ENCODE measurements at regions of chr3 and their contacts with region 1.

Region 1: GRCh38 chr3:126522363-126522788 is 1.6 kb upstream of the CHST13 start:
- DNase-seq: peak; percentile 53 to 71
- ATAC-seq: peak; percentile 48 to 80 (median 65)
- H3K4me3 ChIP-seq: no peak overlapping the region
- H3K27ac ChIP-seq: no peak overlapping the region
- H3K4me1 ChIP-seq: peaks cover 3% of the 10 kb centered on the region
- H3K27me3 ChIP-seq: peaks cover 0 to 4% (median 0%) of the 10 kb centered on the region in 3 donors
- CTCF ChIP-seq: peak; percentile 92

Region 2: DNA sequence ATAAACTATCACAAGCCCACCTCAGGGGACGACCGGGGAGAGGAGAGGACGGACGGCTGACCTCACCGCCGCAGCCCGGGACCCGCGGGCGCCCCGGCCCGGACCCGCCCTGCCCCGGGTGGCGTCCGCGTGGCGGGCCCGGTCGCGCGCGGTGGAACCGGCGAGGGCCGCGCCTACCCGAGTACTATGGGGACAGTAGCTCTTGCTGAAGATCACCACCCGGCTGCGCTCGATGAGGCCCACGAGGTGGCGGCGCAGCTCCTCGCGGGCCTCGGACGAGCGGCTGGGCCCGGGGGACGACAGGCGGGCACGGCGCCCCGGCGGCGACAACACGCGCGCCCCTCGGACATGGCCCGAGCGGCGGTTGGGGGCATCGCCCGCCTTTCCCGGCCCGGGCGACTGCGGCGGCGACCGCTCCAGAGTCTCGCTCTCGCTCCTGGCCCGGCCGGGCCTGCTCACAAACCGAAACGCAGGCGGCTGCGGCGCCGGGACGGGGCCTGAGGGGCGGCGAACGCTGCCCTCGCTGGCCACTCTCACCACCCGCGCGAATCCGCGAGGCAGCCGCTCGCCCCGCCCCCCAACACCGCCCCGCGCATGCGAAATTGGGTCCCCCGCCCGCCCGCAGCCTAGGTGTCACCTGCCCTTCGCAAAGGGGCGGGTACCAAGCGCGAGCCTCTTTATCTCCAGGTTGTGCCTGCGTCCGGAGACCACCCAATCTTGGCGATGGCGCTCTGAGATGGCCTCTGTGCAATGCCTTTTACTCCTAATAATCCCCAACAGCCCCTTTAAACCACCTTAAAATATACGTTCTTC is 132.4 kb after region 1 on chr3 and contains the start of gene TXNRD3:
- intact Hi-C with region 1: loop called in 1 of 2 experiments (anchors 10 kb)
- DNase-seq: peak; percentile 84 to 89
- ATAC-seq: peak; percentile 95 to 99 (median 97)
- H3K4me3 ChIP-seq: peak within 1 kb of the TSS; percentile 87
- H3K27ac ChIP-seq: peak within 1 kb of the TSS; percentile 95
- H3K4me1 ChIP-seq: peaks cover 13% of the 10 kb centered on the region
- H3K27me3 ChIP-seq: no peaks in the 10 kb centered on the region
- CTCF ChIP-seq: peak; percentile 12
- total RNA-seq, gene TXNRD3: 5.0 to 9.6 (median 7.9) TPM

Region 3: DNA sequence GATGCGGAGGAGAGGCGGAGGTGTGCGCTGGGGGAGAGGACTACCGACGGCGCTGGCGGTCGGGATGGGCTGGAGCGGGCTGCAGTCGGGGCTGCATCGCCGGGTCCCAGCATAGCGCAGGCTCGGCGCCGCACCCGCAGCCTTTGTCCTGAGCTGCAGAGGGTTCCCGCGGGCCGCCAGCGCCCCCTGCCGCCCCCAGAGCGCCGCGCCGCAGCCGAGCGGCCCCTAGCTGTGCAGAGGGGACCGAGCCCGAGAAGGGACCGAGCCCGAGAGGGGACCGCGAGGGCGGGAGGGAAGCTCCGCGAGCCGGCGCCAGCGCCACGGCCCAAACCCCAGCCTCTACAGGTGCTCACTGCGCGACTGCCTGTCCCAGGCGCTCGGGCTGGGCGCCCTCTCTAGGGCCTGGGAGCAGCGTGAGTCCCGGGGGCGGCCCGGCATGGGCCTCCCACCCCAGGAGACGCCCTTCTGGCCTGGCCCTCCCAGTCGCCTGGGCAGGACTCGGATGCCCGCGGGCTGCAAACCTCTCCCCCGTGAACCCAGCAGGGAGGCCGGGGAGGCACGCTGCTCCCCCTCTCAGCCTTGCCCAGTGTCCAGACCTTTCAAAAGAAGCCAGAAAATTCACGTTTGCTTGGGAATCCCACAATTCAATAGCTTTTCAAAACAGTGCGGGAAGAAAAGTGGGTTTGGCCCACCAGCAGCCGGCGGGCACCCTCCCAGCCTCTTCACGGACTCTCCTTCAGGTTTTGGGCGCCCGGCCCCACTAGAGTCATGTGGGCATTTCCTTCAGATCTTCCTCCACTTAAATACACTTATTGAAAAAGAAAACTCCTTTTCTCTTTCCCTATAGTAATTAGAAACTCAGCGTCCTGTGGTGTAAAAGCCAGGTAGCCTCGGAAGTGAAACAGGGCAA is 933.4 kb after region 1 on chr3:
- intact Hi-C with region 1: loop called in 1 of 2 experiments (anchors 5 kb)
- DNase-seq: peak; percentile 76 to 82
- ATAC-seq: peak; percentile 87 to 93 (median 89)
- H3K4me3 ChIP-seq: peak overlapping the region; percentile 52
- H3K27ac ChIP-seq: no peak overlapping the region
- H3K4me1 ChIP-seq: peaks cover 5% of the 10 kb centered on the region
- H3K27me3 ChIP-seq: peaks cover 0 to 57% (median 20%) of the 10 kb centered on the region in 3 donors
- CTCF ChIP-seq: peak; percentile 84

Region 4: GRCh38 chr3:127544192-127544802 is 1021.9 kb after region 1 on chr3:
- intact Hi-C with region 1: loop called (anchors 5 to 10 kb)
- DNase-seq: peak; percentile 69 to 84
- ATAC-seq: peak; percentile 42 to 69 (median 58)
- H3K4me3 ChIP-seq: no peak overlapping the region
- H3K27ac ChIP-seq: no peak overlapping the region
- H3K4me1 ChIP-seq: no peaks in the 10 kb centered on the region
- H3K27me3 ChIP-seq: no peaks in the 10 kb centered on the region
- CTCF ChIP-seq: peak; percentile 74